SK-N-SH (cell line): ENCODE measurements at regions of chr1 and their contacts with region 1.

Region 1: DNA sequence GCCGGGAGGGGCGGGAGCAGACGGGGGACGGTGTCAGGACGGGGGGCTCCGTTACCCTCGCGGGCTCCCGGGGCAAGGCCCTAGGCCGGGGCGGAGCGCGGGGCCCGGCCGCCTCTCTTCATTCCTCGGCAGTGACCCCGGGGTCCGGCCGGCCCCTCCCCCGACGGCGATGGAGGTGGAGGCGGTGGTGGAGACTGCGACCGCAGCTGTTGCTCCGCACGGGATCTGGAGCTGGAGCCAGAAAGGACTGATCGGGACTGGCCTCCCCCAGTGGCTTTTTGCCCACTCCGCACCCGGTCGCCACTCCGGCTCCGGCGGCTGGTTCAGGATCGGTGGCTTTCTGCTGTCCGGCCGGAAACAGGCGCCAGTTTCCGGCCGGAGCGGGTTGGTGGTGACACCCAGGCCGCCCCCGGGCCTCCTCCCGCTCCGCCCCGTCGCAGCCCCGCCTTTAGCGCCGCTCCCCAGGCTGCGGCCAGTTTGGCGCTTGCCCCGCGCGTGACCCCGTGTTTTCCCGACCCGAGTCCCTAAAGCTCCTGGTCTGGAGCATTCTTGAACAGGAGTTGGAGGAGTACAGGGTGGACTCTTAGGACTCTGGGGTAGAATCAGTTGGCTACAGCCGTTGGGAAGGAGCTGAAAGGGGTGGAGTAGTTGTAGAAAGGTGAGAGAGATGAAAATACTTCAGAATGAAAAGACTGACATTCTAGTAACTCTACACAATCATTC is at the start of gene OTUD7B:
- DNase-seq: peak; percentile 94
- H3K4me3 ChIP-seq: peak within 1 kb of the TSS; percentile 78 to 100
- H3K27ac ChIP-seq: peak within 1 kb of the TSS; percentile 93 to 98
- H3K4me1 ChIP-seq: peaks cover 19 to 25% of the 10 kb centered on the region in 2 experiments; a peak in 3 of 4 replicates
- H3K27me3 ChIP-seq: no peaks in the 10 kb centered on the region
- CTCF ChIP-seq: no peak; the same call in 1 of the 2 replicates
- EP300 ChIP-seq: peak; percentile 29 to 74; a peak in 2 of 4 replicates
- RAD21 ChIP-seq: 0 out of 2 replicates have a peak, but pooled peaks have one; percentile 8
- polyA plus RNA-seq, gene OTUD7B: 4.2 and 5.8 TPM in 2 replicates

Region 2: GRCh38 chr1:149978547-149979023 is 32.0 kb before region 1 on chr1:
- CTCF ChIA-PET with region 1: no interaction called
- POLR2A ChIA-PET with region 1: no interaction called
- DNase-seq: no peak
- H3K4me3 ChIP-seq: no peak overlapping the region
- H3K27ac ChIP-seq: peak overlapping the region in 1 of 2 experiments; percentile 4; a peak in 1 of 4 replicates
- H3K4me1 ChIP-seq: peaks cover 0 to 14% of the 10 kb centered on the region in 2 experiments; a peak in 3 of 4 replicates
- H3K27me3 ChIP-seq: no peaks in the 10 kb centered on the region
- CTCF ChIP-seq: no peak
- EP300 ChIP-seq: no peak
- RAD21 ChIP-seq: no peak

Region 3: GRCh38 chr1:150067184-150068036 is 56.9 kb after region 1 on chr1 and contains the start of gene VPS45:
- CTCF ChIA-PET with region 1: interaction called, 3 read pairs
- POLR2A ChIA-PET with region 1: interaction called, 16 read pairs
- DNase-seq: peak; percentile 91
- H3K4me3 ChIP-seq: peak within 1 kb of the TSS; percentile 81 to 86
- H3K27ac ChIP-seq: peak within 1 kb of the TSS; percentile 90 to 98
- H3K4me1 ChIP-seq: peaks cover 4 to 21% of the 10 kb centered on the region in 2 experiments; a peak in 3 of 4 replicates
- H3K27me3 ChIP-seq: no peaks in the 10 kb centered on the region
- CTCF ChIP-seq: no peak
- EP300 ChIP-seq: peak in 1 of 2 experiments; percentile 13; a peak in 1 of 4 replicates
- RAD21 ChIP-seq: no peak
- polyA plus RNA-seq, gene VPS45: 31.5 and 48.7 TPM in 2 replicates

Region 4: DNA sequence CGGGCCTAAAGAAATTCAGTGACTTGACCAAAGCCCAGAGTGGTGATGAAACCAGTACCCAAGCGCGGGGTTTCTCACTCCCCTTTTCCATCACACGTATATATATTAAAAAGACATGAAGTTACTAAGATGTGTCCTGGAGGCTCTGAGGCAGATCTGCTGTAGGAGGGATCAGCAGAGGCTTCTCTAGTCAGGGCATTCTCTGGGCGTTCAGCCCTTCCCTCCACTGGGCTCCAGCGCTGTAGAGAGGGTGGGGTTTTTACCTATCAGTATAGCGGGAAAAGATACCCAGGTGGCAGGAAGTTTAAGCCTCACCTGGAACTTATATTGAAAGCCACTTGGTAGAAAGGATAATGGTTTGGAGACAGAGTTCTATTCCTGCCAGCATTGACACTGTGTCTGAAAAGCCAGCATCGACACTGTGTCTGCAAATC is 138.3 kb after region 1 on chr1:
- CTCF ChIA-PET with region 1: no interaction called
- POLR2A ChIA-PET with region 1: no interaction called
- DNase-seq: peak; percentile 54
- H3K4me3 ChIP-seq: peak overlapping the region; percentile 70 to 89
- H3K27ac ChIP-seq: peak overlapping the region; percentile 81 to 87
- H3K4me1 ChIP-seq: peaks cover 13 to 25% of the 10 kb centered on the region in 2 experiments; a peak in 3 of 4 replicates
- H3K27me3 ChIP-seq: no peaks in the 10 kb centered on the region
- CTCF ChIP-seq: no peak
- EP300 ChIP-seq: no peak
- RAD21 ChIP-seq: no peak